HCT116 (cell line): ENCODE measurements at regions of chr6 and their contacts with region 1.

Region 1: GRCh38 chr6:53718597-53719460 is 53.3 kb upstream of the KLHL31 start:
- DNase-seq: peak; percentile 65
- ATAC-seq: peak; percentile 90
- H3K4me3 ChIP-seq: no peak overlapping the region
- H3K27ac ChIP-seq: no peak overlapping the region
- H3K4me1 ChIP-seq: peaks cover 0 to 6% of the 10 kb centered on the region in 2 experiments; a peak in 1 of 4 replicates
- H3K27me3 ChIP-seq: no peaks in the 10 kb centered on the region
- CTCF ChIP-seq: peak; percentile 55 to 91 (median 83); a peak in 5 of 6 replicates
- POLR2A ChIP-seq: no peak
- RAD21 ChIP-seq: peak; percentile 69

Region 2: GRCh38 chr6:53544470-53545308 is 174.1 kb before region 1 on chr6 and contains the start of gene GCLC:
- CTCF ChIA-PET with region 1: interaction called, 10 read pairs
- POLR2A ChIA-PET with region 1: no interaction called
- RAD21 ChIA-PET with region 1: no interaction called
- intact Hi-C with region 1: loop called (anchors 2 kb)
- DNase-seq: peak; percentile 93
- ATAC-seq: peak; percentile 69
- H3K4me3 ChIP-seq: peak within 1 kb of the TSS; percentile 71 to 91
- H3K27ac ChIP-seq: peak within 1 kb of the TSS; percentile 88
- H3K4me1 ChIP-seq: peaks cover 6 to 43% of the 10 kb centered on the region in 2 experiments; a peak in 3 of 4 replicates
- H3K27me3 ChIP-seq: no peaks in the 10 kb centered on the region
- CTCF ChIP-seq: peak; percentile 41 to 49 (median 41)
- POLR2A ChIP-seq: peak; percentile 80
- RAD21 ChIP-seq: peak; percentile 73
- total RNA-seq, gene GCLC: 72.0 TPM

Region 3: DNA sequence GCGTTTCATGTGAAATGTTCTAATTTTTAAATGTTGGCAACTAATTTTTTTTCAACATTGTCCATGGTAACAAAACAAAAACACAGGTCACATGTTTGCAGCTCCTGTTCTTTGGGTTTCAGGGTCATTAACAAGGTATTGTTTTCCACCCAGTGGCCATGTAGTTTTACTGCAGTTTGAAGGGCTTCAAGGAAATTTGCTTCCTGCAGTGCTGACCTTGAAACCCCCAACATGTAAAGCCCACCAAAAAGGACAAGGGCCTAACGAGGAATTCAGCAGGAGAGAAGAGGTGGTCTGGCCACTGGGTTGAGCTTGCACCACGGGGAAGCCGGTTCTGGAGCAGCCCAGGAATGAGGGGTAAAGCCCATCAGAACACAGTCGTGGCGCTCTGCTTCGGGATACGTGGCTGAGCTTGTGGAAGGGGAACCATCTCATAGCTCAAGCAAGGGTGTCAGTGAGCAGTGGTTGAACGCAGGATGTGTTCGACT is 39.3 kb before region 1 on chr6:
- CTCF ChIA-PET with region 1: interaction called, 10 read pairs
- POLR2A ChIA-PET with region 1: no interaction called
- RAD21 ChIA-PET with region 1: no interaction called
- intact Hi-C with region 1: no loop called
- DNase-seq: peak; percentile 60
- ATAC-seq: peak; percentile 87
- H3K4me3 ChIP-seq: no peak overlapping the region
- H3K27ac ChIP-seq: no peak overlapping the region
- H3K4me1 ChIP-seq: peaks cover 0 to 3% of the 10 kb centered on the region in 2 experiments; a peak in 1 of 4 replicates
- H3K27me3 ChIP-seq: no peaks in the 10 kb centered on the region
- CTCF ChIP-seq: peak; percentile 53 to 62 (median 59); a peak in 5 of 6 replicates
- POLR2A ChIP-seq: no peak
- RAD21 ChIP-seq: peak; percentile 72

Region 4: DNA sequence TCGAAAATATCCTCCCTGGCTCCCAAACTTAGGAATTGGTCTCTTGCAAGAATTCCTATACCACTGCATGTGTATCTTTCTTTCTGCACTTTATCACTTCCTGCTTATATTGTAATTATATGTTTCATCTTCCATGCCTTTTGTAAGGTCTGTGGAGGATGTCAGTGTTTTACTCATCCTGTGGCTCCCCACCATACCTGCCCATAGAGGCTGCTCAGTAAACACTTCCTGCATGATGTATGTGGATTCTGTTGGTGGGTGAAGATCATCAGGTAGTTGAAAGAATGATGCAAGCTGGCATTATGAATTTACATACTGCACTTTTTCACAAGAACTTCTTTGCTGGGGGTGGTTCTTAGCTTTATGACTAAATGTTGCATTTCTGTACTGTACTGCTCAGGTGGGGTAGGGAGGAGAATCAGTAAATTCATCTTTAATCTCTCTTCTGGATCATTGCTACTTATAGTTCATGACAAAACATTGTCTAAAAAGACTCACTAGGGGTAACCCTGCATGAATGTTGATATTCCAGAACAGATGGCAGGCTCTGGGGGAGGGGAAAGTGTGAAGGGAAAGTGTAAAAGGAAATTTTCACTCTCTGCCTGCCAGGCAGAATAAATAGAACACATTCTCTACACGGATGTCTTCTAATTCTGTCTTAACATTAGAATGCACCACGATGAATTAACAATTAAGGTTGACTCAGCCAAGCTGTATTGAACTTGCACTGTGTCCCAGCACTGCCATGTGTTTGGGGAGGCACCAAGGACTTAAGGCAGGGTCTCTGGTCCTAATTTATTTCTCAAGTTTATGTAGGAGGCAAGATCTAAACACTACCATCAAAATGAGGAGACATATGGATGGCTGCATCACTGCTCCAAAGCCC is 17.3 kb before region 1 on chr6:
- CTCF ChIA-PET with region 1: interaction called, 25 read pairs
- POLR2A ChIA-PET with region 1: no interaction called
- RAD21 ChIA-PET with region 1: no interaction called
- intact Hi-C with region 1: no loop called
- DNase-seq: no peak
- ATAC-seq: no peak
- H3K4me3 ChIP-seq: no peak overlapping the region
- H3K27ac ChIP-seq: no peak overlapping the region
- H3K4me1 ChIP-seq: no peaks in the 10 kb centered on the region
- H3K27me3 ChIP-seq: no peaks in the 10 kb centered on the region
- CTCF ChIP-seq: no peak
- POLR2A ChIP-seq: no peak
- RAD21 ChIP-seq: no peak

Region 5: GRCh38 chr6:53707108-53707897 is 11.5 kb before region 1 on chr6:
- CTCF ChIA-PET with region 1: interaction called, 25 read pairs
- POLR2A ChIA-PET with region 1: no interaction called
- RAD21 ChIA-PET with region 1: no interaction called
- intact Hi-C with region 1: no loop called
- DNase-seq: no peak
- ATAC-seq: no peak
- H3K4me3 ChIP-seq: no peak overlapping the region
- H3K27ac ChIP-seq: no peak overlapping the region
- H3K4me1 ChIP-seq: no peaks in the 10 kb centered on the region
- H3K27me3 ChIP-seq: no peaks in the 10 kb centered on the region
- CTCF ChIP-seq: no peak
- POLR2A ChIP-seq: no peak
- RAD21 ChIP-seq: no peak

Region 6: DNA sequence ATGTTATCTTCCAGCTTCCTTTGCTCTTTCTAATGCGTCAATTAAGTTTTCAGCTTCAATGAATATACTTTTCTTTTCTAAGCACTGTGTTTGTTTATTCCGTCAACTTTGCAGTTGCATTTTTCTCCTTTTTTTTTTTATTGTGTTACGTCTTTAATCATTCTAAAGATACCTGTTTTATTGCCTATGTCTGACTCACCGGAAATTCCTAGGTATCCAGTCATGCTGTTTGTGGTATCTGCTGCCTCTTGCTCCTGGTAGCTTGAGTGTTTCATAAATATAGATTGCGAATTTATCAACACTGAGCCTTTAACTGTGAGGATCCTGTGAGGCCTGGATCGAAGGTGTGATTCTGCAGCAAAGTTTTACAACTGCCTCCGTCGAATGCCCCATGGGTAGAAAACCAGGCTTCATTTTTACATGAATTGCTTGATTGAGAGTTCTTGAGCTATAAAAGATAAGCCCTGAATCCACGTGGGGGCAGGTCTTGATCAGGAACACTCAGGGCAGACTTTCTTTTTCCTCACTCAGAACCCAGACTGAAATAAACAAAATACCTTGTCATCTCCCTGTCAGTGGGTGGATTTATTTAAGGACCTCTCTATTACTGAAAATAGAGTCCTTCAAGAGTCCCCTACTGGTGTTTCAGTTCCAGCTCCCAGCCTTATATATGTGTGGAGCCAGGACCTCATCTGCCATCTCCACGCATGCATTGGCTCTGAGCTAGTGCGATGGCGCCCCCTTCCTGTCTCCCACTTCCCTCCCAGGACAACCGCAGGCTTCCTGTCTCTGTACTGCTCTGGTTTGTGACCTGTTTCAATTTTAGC is 15.9 kb after region 1 on chr6:
- CTCF ChIA-PET with region 1: interaction called, 79 read pairs
- POLR2A ChIA-PET with region 1: interaction called, 7 read pairs
- RAD21 ChIA-PET with region 1: interaction called in 1 of 2 experiments, 3 read pairs
- intact Hi-C with region 1: no loop called
- DNase-seq: peak; percentile 92
- ATAC-seq: peak; percentile 96
- H3K4me3 ChIP-seq: peak overlapping the region; percentile 10 to 30; a peak in 3 of 4 replicates
- H3K27ac ChIP-seq: peak overlapping the region; percentile 96
- H3K4me1 ChIP-seq: peaks cover 63 to 68% of the 10 kb centered on the region in 2 experiments
- H3K27me3 ChIP-seq: no peaks in the 10 kb centered on the region
- CTCF ChIP-seq: peak; percentile 76 to 83 (median 78); a peak in 5 of 6 replicates
- POLR2A ChIP-seq: no peak
- RAD21 ChIP-seq: peak; percentile 56

Region 7: GRCh38 chr6:53815381-53816119 is 96.7 kb after region 1 on chr6:
- CTCF ChIA-PET with region 1: no interaction called
- POLR2A ChIA-PET with region 1: no interaction called
- RAD21 ChIA-PET with region 1: no interaction called
- intact Hi-C with region 1: no loop called
- DNase-seq: no peak
- ATAC-seq: no peak
- H3K4me3 ChIP-seq: no peak overlapping the region
- H3K27ac ChIP-seq: peak overlapping the region; percentile 7; the same call in 1 of the 2 replicates
- H3K4me1 ChIP-seq: peaks cover 27 to 37% of the 10 kb centered on the region in 2 experiments
- H3K27me3 ChIP-seq: no peaks in the 10 kb centered on the region
- CTCF ChIP-seq: no peak
- POLR2A ChIP-seq: no peak
- RAD21 ChIP-seq: no peak

Region 8: DNA sequence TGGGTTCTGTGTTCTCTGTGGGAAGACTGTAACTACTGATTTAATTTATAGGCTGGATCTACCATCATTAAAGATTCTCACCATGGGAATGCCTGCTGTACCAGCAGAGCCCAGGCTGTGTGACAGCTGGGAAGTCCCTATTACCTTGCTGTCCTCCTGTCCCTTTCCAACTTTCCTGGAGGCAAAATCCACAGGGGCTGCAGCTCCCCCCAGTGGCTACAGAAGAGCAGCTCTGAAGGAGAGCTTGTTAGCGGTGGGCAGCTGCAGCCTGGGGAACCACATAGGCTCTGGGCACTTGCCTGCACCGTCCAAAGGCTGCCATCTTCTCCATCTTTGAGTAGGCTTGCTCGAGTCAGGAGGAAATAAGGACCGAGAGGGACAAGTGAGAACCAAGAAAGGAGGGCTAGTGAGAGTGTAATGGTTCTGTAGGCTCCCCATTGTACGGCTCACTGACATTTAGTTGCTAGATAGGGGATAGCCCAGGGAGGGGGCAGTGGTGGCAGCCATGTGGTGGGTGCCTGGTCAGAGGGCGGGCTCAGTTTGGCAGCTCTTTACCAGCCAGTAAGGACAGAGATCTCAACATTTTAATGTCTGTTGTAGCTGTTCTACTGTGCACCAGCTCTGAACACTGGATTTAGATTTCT is 237.4 kb after region 1 on chr6:
- CTCF ChIA-PET with region 1: interaction called, 33 read pairs
- POLR2A ChIA-PET with region 1: no interaction called
- RAD21 ChIA-PET with region 1: interaction called, 3 to 6 read pairs
- intact Hi-C with region 1: no loop called
- DNase-seq: peak; percentile 72
- ATAC-seq: peak; percentile 99
- H3K4me3 ChIP-seq: no peak overlapping the region
- H3K27ac ChIP-seq: no peak overlapping the region
- H3K4me1 ChIP-seq: peaks cover 0 to 8% of the 10 kb centered on the region in 2 experiments; a peak in 1 of 4 replicates
- H3K27me3 ChIP-seq: no peaks in the 10 kb centered on the region
- CTCF ChIP-seq: peak; percentile 78 to 85 (median 82)
- POLR2A ChIP-seq: no peak
- RAD21 ChIP-seq: peak; percentile 90